Mammary epithelial cell (primary cell): ENCODE measurements at regions of chr9 and their contacts with region 1.

Region 1: GRCh38 chr9:32703635-32704034 is 68.2 kb upstream of the TAF1L start:
- DNase-seq: no peak
- H3K4me3 ChIP-seq: no peak overlapping the region
- H3K27ac ChIP-seq: no peak overlapping the region
- H3K4me1 ChIP-seq: no peaks in the 10 kb centered on the region
- H3K27me3 ChIP-seq: no peaks in the 10 kb centered on the region
- CTCF ChIP-seq: peak; percentile 5 to 45

Region 2: GRCh38 chr9:31364171-31364570 is 1339.5 kb before region 1 on chr9:
- CTCF ChIA-PET with region 1: no interaction called
- dilution Hi-C with region 1: no loop called
- in situ Hi-C with region 1: no loop called
- intact Hi-C with region 1: loop called (anchors 10 kb)
- DNase-seq: no peak
- H3K4me3 ChIP-seq: no peak overlapping the region
- H3K27ac ChIP-seq: no peak overlapping the region
- H3K4me1 ChIP-seq: no peaks in the 10 kb centered on the region
- H3K27me3 ChIP-seq: no peaks in the 10 kb centered on the region
- CTCF ChIP-seq: no peak

Region 3: GRCh38 chr9:32378993-32379729 is 324.5 kb before region 1 on chr9:
- CTCF ChIA-PET with region 1: no interaction called
- dilution Hi-C with region 1: no loop called
- in situ Hi-C with region 1: loop called in 1 of 2 experiments (anchors 25 kb)
- intact Hi-C with region 1: loop called (anchors 2 kb)
- DNase-seq: peak; percentile 68
- H3K4me3 ChIP-seq: no peak overlapping the region
- H3K27ac ChIP-seq: no peak overlapping the region
- H3K4me1 ChIP-seq: peaks cover 7% of the 10 kb centered on the region
- H3K27me3 ChIP-seq: no peaks in the 10 kb centered on the region
- CTCF ChIP-seq: peak; percentile 82 to 85

Region 4: DNA sequence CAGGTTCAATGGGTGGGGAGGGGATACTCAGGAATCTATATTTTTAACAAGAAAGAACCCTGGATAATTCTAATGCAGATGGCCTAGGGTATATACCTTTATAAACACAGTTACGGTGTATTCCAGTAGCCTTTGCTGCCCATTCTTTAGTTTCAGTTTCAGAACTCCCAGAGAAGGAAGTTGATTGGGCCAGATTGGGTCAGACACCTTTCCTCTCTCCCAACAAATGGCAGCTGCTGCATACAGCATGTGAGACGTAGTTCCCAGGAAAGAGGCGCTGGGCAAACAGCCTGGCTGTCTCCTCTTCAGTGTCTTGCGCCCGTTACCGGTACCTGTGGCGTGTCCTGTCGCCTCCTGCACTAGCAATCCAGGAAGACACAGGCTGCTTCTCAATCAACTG is 298.8 kb before region 1 on chr9:
- CTCF ChIA-PET with region 1: no interaction called
- dilution Hi-C with region 1: no loop called
- in situ Hi-C with region 1: no loop called
- intact Hi-C with region 1: no loop called
- DNase-seq: no peak
- H3K4me3 ChIP-seq: no peak overlapping the region
- H3K27ac ChIP-seq: no peak overlapping the region
- H3K4me1 ChIP-seq: no peaks in the 10 kb centered on the region
- H3K27me3 ChIP-seq: no peaks in the 10 kb centered on the region
- CTCF ChIP-seq: no peak

Region 5: DNA sequence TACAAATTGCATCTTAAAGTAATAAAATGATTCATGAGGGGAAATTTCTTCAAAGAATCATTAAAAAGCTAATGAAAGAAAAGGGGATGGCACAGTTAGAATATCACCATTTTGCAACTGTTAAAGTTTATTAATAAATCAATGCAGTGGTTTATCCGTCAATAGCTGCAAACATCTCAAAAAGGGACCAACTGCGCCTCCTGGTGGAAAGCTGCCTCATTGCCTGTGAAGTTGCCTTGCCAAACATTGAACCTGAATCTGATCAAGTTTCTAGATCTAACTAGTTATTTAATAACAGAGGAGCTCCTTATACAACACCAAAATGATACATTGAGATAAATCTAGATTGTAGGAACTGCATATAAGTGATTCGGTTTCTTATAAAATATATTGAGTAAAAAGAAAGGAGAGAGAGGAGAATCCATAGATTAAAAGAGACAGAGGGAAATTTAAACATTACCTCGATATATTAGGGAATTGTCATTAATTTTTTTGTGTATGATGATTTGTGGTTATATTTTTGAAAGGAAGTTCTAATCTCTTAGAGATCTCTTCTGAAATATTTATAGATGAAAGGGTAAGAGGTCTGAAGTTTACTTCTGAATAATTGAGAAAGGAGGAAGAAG is 123.8 kb before region 1 on chr9:
- CTCF ChIA-PET with region 1: no interaction called
- dilution Hi-C with region 1: no loop called
- in situ Hi-C with region 1: loop called in 1 of 2 experiments (anchors 25 kb)
- intact Hi-C with region 1: loop called (anchors 2 kb)
- DNase-seq: peak; percentile 25
- H3K4me3 ChIP-seq: no peak overlapping the region
- H3K27ac ChIP-seq: no peak overlapping the region
- H3K4me1 ChIP-seq: no peaks in the 10 kb centered on the region
- H3K27me3 ChIP-seq: no peaks in the 10 kb centered on the region
- CTCF ChIP-seq: peak; percentile 93 to 96

Region 6: DNA sequence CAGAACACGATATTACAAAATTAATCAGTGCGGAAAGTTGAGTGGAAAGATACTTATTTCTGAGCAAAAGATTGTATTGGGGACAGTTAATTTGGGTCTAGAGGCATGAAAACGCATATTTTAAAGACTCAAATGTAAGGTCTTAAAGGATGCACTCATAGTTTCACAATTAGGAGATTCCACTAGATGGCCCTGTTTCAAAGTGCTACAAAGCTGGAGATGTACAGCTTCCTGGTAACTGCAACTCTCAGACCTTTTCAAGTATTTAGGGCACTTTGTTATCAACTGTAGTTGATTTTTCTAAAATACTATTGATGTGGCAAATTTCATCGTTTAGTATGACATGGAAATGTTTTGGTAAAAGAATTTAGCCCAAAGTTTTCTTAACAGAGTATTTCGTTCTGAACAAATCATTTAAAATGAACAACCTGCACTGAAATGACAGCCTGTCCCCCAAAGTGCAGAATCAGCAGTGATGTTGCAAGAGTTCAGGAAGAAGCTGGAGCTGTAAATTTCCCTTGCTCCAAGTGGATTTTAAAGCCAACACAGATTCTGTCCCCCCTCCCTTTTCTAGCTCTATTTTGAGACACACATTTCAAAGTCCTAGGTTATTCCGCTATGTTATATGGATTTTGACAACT is 114.4 kb before region 1 on chr9:
- CTCF ChIA-PET with region 1: no interaction called
- dilution Hi-C with region 1: no loop called
- in situ Hi-C with region 1: loop called in 1 of 2 experiments (anchors 25 kb)
- intact Hi-C with region 1: loop called (anchors 1 kb)
- DNase-seq: peak; percentile 35
- H3K4me3 ChIP-seq: no peak overlapping the region
- H3K27ac ChIP-seq: no peak overlapping the region
- H3K4me1 ChIP-seq: no peaks in the 10 kb centered on the region
- H3K27me3 ChIP-seq: no peaks in the 10 kb centered on the region
- CTCF ChIP-seq: peak; percentile 59 to 71

Region 7: DNA sequence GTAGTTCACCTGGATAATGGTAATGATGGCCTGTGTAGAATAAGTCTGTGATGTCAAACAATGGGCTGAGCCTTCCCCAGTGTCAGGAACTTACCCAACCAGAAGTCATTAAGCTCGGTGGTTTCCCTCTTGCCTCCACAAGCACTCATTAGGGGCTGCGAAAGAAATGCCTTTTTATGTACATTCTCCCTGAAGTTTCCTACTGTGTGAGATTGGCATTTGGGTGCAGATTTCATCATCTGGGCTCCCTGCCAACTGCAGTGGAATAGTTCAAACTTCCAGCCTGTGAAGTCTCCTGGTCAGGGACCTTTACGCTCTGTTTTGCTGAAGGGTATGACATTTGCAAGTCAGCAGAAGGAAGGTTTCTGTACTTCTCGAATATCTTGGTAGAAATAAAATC is 38.1 kb after region 1 on chr9:
- CTCF ChIA-PET with region 1: no interaction called
- dilution Hi-C with region 1: no loop called
- in situ Hi-C with region 1: no loop called
- intact Hi-C with region 1: loop called (anchors 10 kb)
- DNase-seq: peak; percentile 55
- H3K4me3 ChIP-seq: no peak overlapping the region
- H3K27ac ChIP-seq: peak overlapping the region; percentile 16
- H3K4me1 ChIP-seq: peaks cover 32% of the 10 kb centered on the region
- H3K27me3 ChIP-seq: no peaks in the 10 kb centered on the region
- CTCF ChIP-seq: no peak

Region 8: DNA sequence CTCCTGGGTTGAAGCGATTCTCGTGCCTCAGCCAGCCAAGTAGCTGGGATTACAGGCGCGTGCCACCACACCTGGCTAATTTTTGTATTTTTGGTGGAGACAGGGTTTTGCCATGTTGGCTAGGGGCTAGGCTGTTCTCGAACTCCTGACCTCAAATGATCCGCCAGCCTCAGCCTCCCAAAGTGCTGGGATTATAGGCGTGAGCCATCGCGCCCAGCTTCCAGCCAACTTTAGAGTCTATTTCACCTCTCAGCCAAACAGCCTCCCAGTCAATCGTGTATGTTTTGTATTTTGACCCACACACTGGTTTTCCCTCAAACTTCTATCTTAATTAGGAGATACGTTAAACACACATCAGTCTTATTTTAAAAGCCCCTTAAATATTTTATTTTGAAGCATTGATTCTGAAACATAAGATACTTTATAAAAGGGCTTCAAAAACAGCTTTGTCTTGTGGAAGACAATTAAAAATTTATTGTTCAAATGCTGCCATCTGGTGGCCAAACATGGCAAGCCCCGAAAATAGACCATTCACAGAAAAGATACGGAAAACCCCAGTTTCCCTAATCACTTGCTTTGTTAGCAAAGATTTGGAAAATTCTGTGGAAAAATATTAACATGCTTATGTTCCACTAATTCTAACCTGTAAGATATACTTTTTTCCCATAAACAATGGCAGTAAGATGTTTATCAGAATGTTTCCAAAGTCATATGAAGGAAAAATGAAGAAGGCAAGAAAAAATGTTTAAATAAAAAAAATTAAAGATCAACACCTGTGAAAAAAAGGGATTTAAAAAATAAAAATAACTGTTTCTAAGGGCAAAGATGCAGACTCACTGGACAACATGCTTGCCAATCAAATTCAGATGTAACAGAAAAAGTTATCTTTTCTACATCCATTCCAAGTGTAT is 264.7 kb after region 1 on chr9:
- CTCF ChIA-PET with region 1: interaction called, 3 read pairs
- dilution Hi-C with region 1: no loop called
- in situ Hi-C with region 1: no loop called
- intact Hi-C with region 1: loop called (anchors 10 kb)
- DNase-seq: peak; percentile 19
- H3K4me3 ChIP-seq: no peak overlapping the region
- H3K27ac ChIP-seq: no peak overlapping the region
- H3K4me1 ChIP-seq: no peaks in the 10 kb centered on the region
- H3K27me3 ChIP-seq: no peaks in the 10 kb centered on the region
- CTCF ChIP-seq: peak; percentile 77 to 79